CD4-positive, alpha-beta T cell (primary cell): ENCODE measurements at regions of chr18 and their contacts with region 1.

Region 1: DNA sequence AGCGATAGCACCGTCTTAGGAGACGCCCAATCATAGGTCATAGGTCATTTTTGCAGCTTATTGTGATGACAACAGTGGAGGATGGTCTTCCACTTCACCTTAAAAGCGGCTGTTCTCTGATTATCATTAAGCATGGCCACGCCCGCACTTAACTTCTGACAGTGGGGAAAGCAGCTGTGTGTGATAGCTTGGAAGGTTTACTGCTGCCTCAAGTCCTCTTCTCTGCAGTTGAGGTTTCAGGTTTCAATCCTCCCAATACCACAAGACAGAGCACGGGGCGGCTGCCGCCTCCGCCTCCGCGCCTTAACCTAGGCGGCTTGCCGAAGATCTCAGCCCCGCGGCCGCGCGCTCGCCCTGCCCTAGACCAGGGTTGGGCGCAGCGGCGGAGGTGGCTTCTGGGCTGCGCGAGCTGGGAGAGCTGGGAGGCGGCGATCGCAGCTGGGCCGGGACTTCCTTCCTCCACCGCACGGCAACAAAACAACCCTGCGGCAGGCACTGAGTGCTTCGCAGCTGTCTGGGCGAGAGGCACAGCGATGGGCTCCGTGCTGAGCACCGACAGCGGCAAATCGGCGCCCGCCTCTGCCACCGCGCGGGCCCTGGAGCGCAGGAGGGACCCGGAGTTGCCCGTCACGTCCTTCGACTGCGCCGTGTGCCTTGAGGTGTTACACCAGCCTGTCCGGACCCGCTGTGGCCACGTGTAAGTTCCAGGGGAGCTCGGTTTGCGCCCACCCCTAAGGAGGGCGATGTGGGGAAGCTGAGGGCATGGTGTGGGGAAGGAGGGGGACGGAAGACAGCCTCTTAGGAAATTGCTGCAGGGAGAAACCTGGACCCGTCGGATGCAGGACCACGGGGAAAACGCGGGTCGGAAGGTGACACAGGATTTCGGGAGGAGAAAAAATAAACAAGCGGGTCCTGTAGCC is at the start of gene RNF125:
- DNase-seq: peak; percentile 84 to 97 (median 89)
- ATAC-seq: peak; percentile 69
- H3K4me3 ChIP-seq: peak within 1 kb of the TSS; percentile 99
- H3K4me3 Mint-ChIP-seq: peak within 1 kb of the TSS; percentile 99
- H3K27ac ChIP-seq: peak within 1 kb of the TSS; percentile 82 to 87
- H3K27ac Mint-ChIP-seq: peak within 1 kb of the TSS; percentile 99
- H3K4me1 ChIP-seq: peaks cover 40% of the 10 kb centered on the region
- H3K4me1 Mint-ChIP-seq: peaks cover 65% of the 10 kb centered on the region
- H3K27me3 ChIP-seq: no peaks in the 10 kb centered on the region
- H3K27me3 Mint-ChIP-seq: no peaks in the 10 kb centered on the region
- CTCF ChIP-seq: no peak
- total RNA-seq, gene RNF125: 107 to 112 TPM

Region 2: GRCh38 chr18:31942999-31943865 is 75.4 kb before region 1 on chr18 and contains the start of gene TRAPPC8:
- CTCF ChIA-PET with region 1: interaction called, 14 read pairs
- POLR2A ChIA-PET with region 1: interaction called, 224 read pairs
- intact Hi-C with region 1: loop called (anchors 1 to 2 kb)
- DNase-seq: peak; percentile 83 to 98 (median 86)
- ATAC-seq: peak; percentile 88
- H3K4me3 ChIP-seq: peak within 1 kb of the TSS; percentile 96
- H3K4me3 Mint-ChIP-seq: peak within 1 kb of the TSS; percentile 95
- H3K27ac ChIP-seq: peak within 1 kb of the TSS; percentile 93 to 97
- H3K27ac Mint-ChIP-seq: peak within 1 kb of the TSS; percentile 93
- H3K4me1 ChIP-seq: peaks cover 27% of the 10 kb centered on the region
- H3K4me1 Mint-ChIP-seq: peaks cover 52% of the 10 kb centered on the region
- H3K27me3 ChIP-seq: no peaks in the 10 kb centered on the region
- H3K27me3 Mint-ChIP-seq: no peaks in the 10 kb centered on the region
- CTCF ChIP-seq: peak; percentile 25
- total RNA-seq, gene TRAPPC8: 24.4 to 26.3 TPM

Region 3: DNA sequence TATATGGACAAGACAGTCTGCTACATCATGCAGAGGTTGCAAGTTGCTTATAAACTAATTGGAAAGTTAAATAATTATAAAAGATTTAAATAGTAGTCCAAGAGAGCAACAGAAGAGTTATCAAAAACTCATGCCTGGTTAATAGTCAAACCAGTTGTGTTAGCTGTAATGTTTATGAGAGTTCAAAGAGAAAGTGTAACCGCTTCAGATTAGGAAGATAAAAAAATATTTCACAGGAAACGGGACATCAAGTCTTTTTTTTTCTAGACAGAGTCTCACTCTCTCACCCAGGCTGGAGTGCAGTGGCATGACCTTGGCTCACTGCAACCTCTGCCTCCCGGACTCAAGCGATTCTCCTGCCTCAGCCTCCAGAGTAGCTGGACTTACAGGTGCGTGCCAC is 34.6 kb before region 1 on chr18:
- CTCF ChIA-PET with region 1: interaction called, 4 read pairs
- POLR2A ChIA-PET with region 1: interaction called, 22 read pairs
- intact Hi-C with region 1: loop called in 1 of 2 experiments (anchors 5 kb)
- DNase-seq: peak in 3 of 14 experiments; percentile 28 to 62 (median 33)
- ATAC-seq: peak; percentile 32
- H3K4me3 ChIP-seq: no peak overlapping the region
- H3K4me3 Mint-ChIP-seq: no peak overlapping the region
- H3K27ac ChIP-seq: no peak overlapping the region
- H3K27ac Mint-ChIP-seq: no peak overlapping the region
- H3K4me1 ChIP-seq: peaks cover 19% of the 10 kb centered on the region
- H3K4me1 Mint-ChIP-seq: peaks cover 27% of the 10 kb centered on the region
- H3K27me3 ChIP-seq: no peaks in the 10 kb centered on the region
- H3K27me3 Mint-ChIP-seq: no peaks in the 10 kb centered on the region
- CTCF ChIP-seq: no peak

Region 4: DNA sequence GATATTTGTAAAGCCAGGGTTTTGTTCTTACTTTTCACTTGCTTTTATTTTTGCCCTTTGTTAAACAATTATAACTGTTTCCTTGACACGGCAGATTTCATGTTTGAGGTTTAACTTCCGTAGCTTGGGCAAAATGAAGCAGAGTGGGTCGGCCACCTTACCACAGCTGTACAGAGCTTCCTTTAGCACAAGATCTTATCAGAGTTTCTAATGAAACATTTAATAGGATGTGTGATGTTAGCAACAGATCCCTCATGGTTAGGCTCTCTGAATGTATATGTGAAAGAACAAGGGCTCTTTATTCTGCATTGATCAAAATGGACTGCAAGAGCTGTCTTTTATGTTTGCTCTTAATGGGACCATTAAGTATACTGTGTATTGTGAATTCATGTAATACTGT is 22.3 kb after region 1 on chr18:
- CTCF ChIA-PET with region 1: no interaction called
- POLR2A ChIA-PET with region 1: interaction called, 108 read pairs
- intact Hi-C with region 1: loop called (anchors 2 kb)
- DNase-seq: peak in 11 of 14 experiments; percentile 12 to 84 (median 32)
- ATAC-seq: peak; percentile 71
- H3K4me3 ChIP-seq: peak overlapping the region; percentile 2
- H3K4me3 Mint-ChIP-seq: peak overlapping the region; percentile 77
- H3K27ac ChIP-seq: peak overlapping the region in 1 of 2 donors; percentile 8
- H3K27ac Mint-ChIP-seq: peak overlapping the region; percentile 74
- H3K4me1 ChIP-seq: peaks cover 38% of the 10 kb centered on the region
- H3K4me1 Mint-ChIP-seq: peaks cover 62% of the 10 kb centered on the region
- H3K27me3 ChIP-seq: no peaks in the 10 kb centered on the region
- H3K27me3 Mint-ChIP-seq: no peaks in the 10 kb centered on the region
- CTCF ChIP-seq: no peak

Region 5: GRCh38 chr18:32056613-32057358 is 38.2 kb after region 1 on chr18:
- CTCF ChIA-PET with region 1: no interaction called
- POLR2A ChIA-PET with region 1: interaction called, 12 read pairs
- intact Hi-C with region 1: loop called (anchors 5 kb)
- DNase-seq: peak in 1 of 14 experiments; percentile 25
- ATAC-seq: no peak
- H3K4me3 ChIP-seq: no peak overlapping the region
- H3K4me3 Mint-ChIP-seq: no peak overlapping the region
- H3K27ac ChIP-seq: no peak overlapping the region
- H3K27ac Mint-ChIP-seq: peak overlapping the region; percentile 34
- H3K4me1 ChIP-seq: peaks cover 8% of the 10 kb centered on the region
- H3K4me1 Mint-ChIP-seq: peaks cover 70% of the 10 kb centered on the region
- H3K27me3 ChIP-seq: no peaks in the 10 kb centered on the region
- H3K27me3 Mint-ChIP-seq: no peaks in the 10 kb centered on the region
- CTCF ChIP-seq: no peak

Region 6: DNA sequence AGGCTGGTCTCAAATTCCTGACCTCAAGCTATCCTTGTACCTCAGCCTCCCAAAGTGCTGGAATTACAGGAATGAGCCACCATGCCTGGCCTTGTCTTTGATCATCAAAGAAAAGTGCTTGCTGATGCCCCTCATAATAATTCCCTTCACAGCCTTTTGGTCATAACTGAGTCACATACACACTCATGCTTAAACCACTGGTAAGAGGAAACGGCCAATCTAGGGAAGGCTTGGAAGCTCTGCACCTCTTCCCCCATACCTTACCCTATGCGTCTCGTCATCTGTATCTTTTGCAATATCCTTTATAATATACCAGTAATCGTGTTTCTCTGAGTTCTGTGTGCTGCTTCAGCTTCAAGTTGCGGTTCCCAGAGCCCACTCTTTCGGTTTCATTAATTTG is 68.3 kb after region 1 on chr18:
- CTCF ChIA-PET with region 1: interaction called, 11 read pairs
- POLR2A ChIA-PET with region 1: interaction called, 139 read pairs
- intact Hi-C with region 1: loop called (anchors 1 kb)
- DNase-seq: peak in 2 of 14 experiments; percentile 37 to 56
- ATAC-seq: no peak
- H3K4me3 ChIP-seq: no peak overlapping the region
- H3K4me3 Mint-ChIP-seq: peak overlapping the region; percentile 30
- H3K27ac ChIP-seq: no peak overlapping the region
- H3K27ac Mint-ChIP-seq: peak overlapping the region; percentile 43
- H3K4me1 ChIP-seq: peaks cover 38% of the 10 kb centered on the region
- H3K4me1 Mint-ChIP-seq: peaks cover 53% of the 10 kb centered on the region
- H3K27me3 ChIP-seq: no peaks in the 10 kb centered on the region
- H3K27me3 Mint-ChIP-seq: peaks cover 5% of the 10 kb centered on the region
- CTCF ChIP-seq: no peak